ENCODE measurements at regions of chr5 and their contacts with region 1.

Region 1: GRCh38 chr5:60677844-60678664 is 21.9 kb downstream of the DEPDC1B start:
- DNase-seq: peak; percentile 58
- H3K4me3 Mint-ChIP-seq: peak overlapping the region; percentile 13
- H3K27ac Mint-ChIP-seq: peak overlapping the region; percentile 84
- H3K4me1 Mint-ChIP-seq: no peaks in the 10 kb centered on the region
- H3K27me3 Mint-ChIP-seq: no peaks in the 10 kb centered on the region
- CTCF ChIP-seq: peak; percentile 47

Region 2: GRCh38 chr5:60604771-60605170 is 73.3 kb before region 1 on chr5:
- CTCF ChIA-PET with region 1: no interaction called
- POLR2A ChIA-PET with region 1: no interaction called
- intact Hi-C with region 1: no loop called
- DNase-seq: no peak
- H3K4me3 Mint-ChIP-seq: no peak overlapping the region
- H3K27ac Mint-ChIP-seq: no peak overlapping the region
- H3K4me1 Mint-ChIP-seq: no peaks in the 10 kb centered on the region
- H3K27me3 Mint-ChIP-seq: no peaks in the 10 kb centered on the region
- CTCF ChIP-seq: no peak

Region 3: DNA sequence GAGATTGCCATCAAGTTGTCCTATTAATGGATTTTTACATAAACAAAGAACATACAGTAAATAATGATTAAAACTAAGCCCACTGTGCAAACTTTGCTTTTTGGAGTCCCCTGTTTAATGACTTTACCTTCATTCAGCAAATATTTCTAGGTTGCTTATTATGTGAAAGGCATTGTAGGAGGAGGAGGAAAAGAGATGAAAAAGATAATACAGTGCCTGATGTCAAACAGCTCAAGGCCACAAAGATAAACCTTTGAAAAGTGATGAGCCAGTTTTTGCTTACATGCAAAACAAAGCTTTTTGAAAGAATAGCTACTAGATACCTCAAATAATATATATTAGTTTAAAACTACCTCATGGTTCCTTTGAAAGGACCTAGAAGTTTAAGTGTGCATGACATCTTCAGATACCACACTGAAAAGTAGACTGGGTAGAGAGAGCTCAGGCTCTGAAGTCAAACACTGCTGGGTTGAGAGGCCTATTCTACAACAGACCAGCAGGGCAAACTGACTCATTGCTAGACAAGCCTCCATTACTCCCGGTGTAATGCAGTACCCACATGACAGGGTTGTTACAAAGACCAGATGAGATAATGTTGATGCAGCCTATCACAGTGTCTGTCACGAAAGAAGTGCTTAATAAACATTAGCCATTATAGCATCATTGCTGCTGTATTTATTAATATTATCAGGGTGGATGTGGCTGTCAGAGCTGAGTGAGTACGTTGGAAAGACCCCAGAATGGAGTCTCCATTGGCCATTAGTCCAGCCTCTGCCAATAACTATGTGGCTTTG is 10.1 kb after region 1 on chr5:
- CTCF ChIA-PET with region 1: interaction called, 21 read pairs
- POLR2A ChIA-PET with region 1: interaction called, 3 read pairs
- intact Hi-C with region 1: no loop called
- DNase-seq: peak; percentile 53
- H3K4me3 Mint-ChIP-seq: no peak overlapping the region
- H3K27ac Mint-ChIP-seq: no peak overlapping the region
- H3K4me1 Mint-ChIP-seq: peaks cover 12% of the 10 kb centered on the region
- H3K27me3 Mint-ChIP-seq: no peaks in the 10 kb centered on the region
- CTCF ChIP-seq: peak; percentile 22

Region 4: GRCh38 chr5:60843936-60844905 is 166.2 kb after region 1 on chr5 and contains the start of gene ELOVL7:
- CTCF ChIA-PET with region 1: interaction called, 12 read pairs
- POLR2A ChIA-PET with region 1: no interaction called
- intact Hi-C with region 1: loop called (anchors 5 kb)
- DNase-seq: peak; percentile 76
- H3K4me3 Mint-ChIP-seq: peak within 1 kb of the TSS; percentile 88
- H3K27ac Mint-ChIP-seq: peak within 1 kb of the TSS; percentile 75
- H3K4me1 Mint-ChIP-seq: peaks cover 18% of the 10 kb centered on the region
- H3K27me3 Mint-ChIP-seq: no peaks in the 10 kb centered on the region
- CTCF ChIP-seq: no peak
- total RNA-seq, gene ELOVL7: 10.3 and 14.3 TPM in 2 replicates

Region 5: GRCh38 chr5:60929024-60929423 is 251.0 kb after region 1 on chr5:
- CTCF ChIA-PET with region 1: interaction called, 14 read pairs
- POLR2A ChIA-PET with region 1: interaction called, 3 read pairs
- intact Hi-C with region 1: loop called (anchors 1 kb)
- DNase-seq: no peak
- H3K4me3 Mint-ChIP-seq: no peak overlapping the region
- H3K27ac Mint-ChIP-seq: no peak overlapping the region
- H3K4me1 Mint-ChIP-seq: no peaks in the 10 kb centered on the region
- H3K27me3 Mint-ChIP-seq: no peaks in the 10 kb centered on the region
- CTCF ChIP-seq: peak; percentile 48

Region 6: GRCh38 chr5:61055434-61056006 is 377.5 kb after region 1 on chr5:
- CTCF ChIA-PET with region 1: interaction called, 5 read pairs
- POLR2A ChIA-PET with region 1: no interaction called
- intact Hi-C with region 1: loop called (anchors 5 kb)
- DNase-seq: peak; percentile 51
- H3K4me3 Mint-ChIP-seq: no peak overlapping the region
- H3K27ac Mint-ChIP-seq: no peak overlapping the region
- H3K4me1 Mint-ChIP-seq: peaks cover 33% of the 10 kb centered on the region
- H3K27me3 Mint-ChIP-seq: no peaks in the 10 kb centered on the region
- CTCF ChIP-seq: peak; percentile 60

Region 7: GRCh38 chr5:61658592-61659008 is 980.5 kb after region 1 on chr5:
- CTCF ChIA-PET with region 1: interaction called, 4 read pairs
- POLR2A ChIA-PET with region 1: no interaction called
- intact Hi-C with region 1: loop called (anchors 5 kb)
- DNase-seq: peak; percentile 80
- H3K4me3 Mint-ChIP-seq: no peak overlapping the region
- H3K27ac Mint-ChIP-seq: no peak overlapping the region
- H3K4me1 Mint-ChIP-seq: no peaks in the 10 kb centered on the region
- H3K27me3 Mint-ChIP-seq: no peaks in the 10 kb centered on the region
- CTCF ChIP-seq: peak; percentile 94